H1 (cell line): ENCODE measurements at regions of chr11 and their contacts with region 1.

Region 1: GRCh38 chr11:124865921-124866583 is 820 bp downstream of the ROBO3 start:
- DNase-seq: peak in 1 of 2 experiments; percentile 89
- H3K4me3 ChIP-seq: peak overlapping the region; percentile 17 to 50 (median 24); a peak in 6 of 8 replicates
- H3K27ac ChIP-seq: no peak overlapping the region
- H3K4me1 ChIP-seq: peaks cover 0 to 23% (median 16%) of the 10 kb centered on the region in 4 experiments; a peak in 6 of 7 replicates
- H3K27me3 ChIP-seq: peaks cover 97 to 100% (median 100%) of the 10 kb centered on the region in 4 experiments
- CTCF ChIP-seq: peak; percentile 70 to 77 (median 75)
- EP300 ChIP-seq: no peak
- POLR2A ChIP-seq: no peak
- RAD21 ChIP-seq: peak; percentile 44 to 58

Region 2: DNA sequence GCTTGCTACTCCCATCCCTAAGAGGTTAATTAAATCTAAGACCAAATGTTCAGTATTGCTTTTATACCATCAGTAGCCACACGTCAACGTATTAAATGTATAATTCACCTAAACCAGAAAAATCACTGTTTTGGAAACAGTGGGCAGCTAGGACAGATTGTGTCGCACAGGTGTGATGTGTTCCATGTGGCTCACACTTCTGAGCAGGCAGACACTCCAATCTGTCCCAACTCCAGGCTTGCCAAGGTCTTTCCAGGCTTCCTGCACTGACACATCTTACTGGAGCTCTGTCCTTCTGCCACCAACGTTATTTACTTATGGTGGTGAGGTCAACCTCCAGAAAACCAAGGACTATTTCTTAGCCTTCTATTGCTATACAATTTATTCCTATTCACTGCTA is 203.9 kb before region 1 on chr11:
- CTCF ChIA-PET with region 1: interaction called, 15 read pairs
- POLR2A ChIA-PET with region 1: no interaction called
- DNase-seq: no peak
- H3K4me3 ChIP-seq: no peak overlapping the region
- H3K27ac ChIP-seq: no peak overlapping the region
- H3K4me1 ChIP-seq: peaks cover 0 to 7% (median 4%) of the 10 kb centered on the region in 4 experiments; a peak in 4 of 7 replicates
- H3K27me3 ChIP-seq: no peaks in the 10 kb centered on the region; a peak in 2 of 7 replicates
- CTCF ChIP-seq: no peak
- EP300 ChIP-seq: no peak
- POLR2A ChIP-seq: no peak
- RAD21 ChIP-seq: no peak

Region 3: DNA sequence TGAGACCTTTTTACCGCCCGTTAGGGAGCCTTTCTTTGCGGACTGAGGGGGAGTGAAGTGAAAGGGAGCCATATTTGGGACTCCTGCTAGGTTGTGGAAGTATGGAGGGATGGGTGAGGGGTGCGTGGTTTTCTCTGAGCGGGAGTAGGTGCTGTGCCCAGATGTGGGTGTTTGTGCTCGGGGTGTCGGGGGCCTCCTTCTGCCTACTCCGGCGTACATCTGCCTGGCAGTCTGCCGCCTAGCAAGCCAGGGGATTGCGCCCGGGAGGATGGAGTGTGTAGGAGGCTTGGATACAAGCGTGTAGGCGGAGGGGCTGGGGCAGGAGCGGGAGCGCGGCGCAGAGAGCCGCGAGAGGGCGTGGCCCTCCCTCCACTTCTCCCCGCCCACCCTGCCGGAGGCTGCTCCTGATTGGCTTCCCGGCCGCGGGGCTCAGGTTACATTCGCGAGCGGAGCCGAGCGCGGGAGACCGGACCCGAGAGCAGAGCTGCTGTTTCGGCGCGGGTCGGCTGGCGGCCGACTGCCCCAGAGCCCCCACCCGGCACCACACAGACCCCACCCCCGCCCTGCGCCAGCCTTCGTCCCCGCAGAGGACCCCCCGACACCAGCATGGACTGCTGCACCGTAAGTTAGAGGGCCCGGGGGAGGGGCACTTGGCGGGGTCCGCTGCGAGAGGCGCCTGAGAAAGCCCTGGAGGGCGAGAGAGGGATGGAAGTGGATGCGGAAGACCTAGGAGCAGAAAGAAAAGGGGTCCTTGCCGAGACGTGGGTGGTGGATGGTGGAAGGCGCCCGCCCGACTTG is 126.4 kb before region 1 on chr11 and contains the start of gene NRGN:
- CTCF ChIA-PET with region 1: interaction called, 14 read pairs
- POLR2A ChIA-PET with region 1: no interaction called
- DNase-seq: peak; percentile 76 to 95
- H3K4me3 ChIP-seq: peak within 1 kb of the TSS; percentile 40 to 68 (median 62)
- H3K27ac ChIP-seq: no peak within 1 kb of the TSS
- H3K4me1 ChIP-seq: peaks cover 0 to 15% (median 2%) of the 10 kb centered on the region in 4 experiments; a peak in 5 of 7 replicates
- H3K27me3 ChIP-seq: peaks cover 69 to 93% (median 83%) of the 10 kb centered on the region in 4 experiments
- CTCF ChIP-seq: no peak
- EP300 ChIP-seq: no peak
- POLR2A ChIP-seq: no peak
- RAD21 ChIP-seq: no peak
- total RNA-seq, gene NRGN: 0.60 and 0.75 TPM in 2 replicates

Region 4: GRCh38 chr11:124753205-124753604 is 112.8 kb before region 1 on chr11:
- CTCF ChIA-PET with region 1: interaction called, 11 read pairs
- POLR2A ChIA-PET with region 1: no interaction called
- DNase-seq: no peak
- H3K4me3 ChIP-seq: no peak overlapping the region
- H3K27ac ChIP-seq: no peak overlapping the region
- H3K4me1 ChIP-seq: peaks cover 6 to 31% (median 12%) of the 10 kb centered on the region in 4 experiments
- H3K27me3 ChIP-seq: peaks cover 91 to 100% (median 97%) of the 10 kb centered on the region in 4 experiments
- CTCF ChIP-seq: no peak
- EP300 ChIP-seq: no peak
- POLR2A ChIP-seq: no peak
- RAD21 ChIP-seq: no peak

Region 5: DNA sequence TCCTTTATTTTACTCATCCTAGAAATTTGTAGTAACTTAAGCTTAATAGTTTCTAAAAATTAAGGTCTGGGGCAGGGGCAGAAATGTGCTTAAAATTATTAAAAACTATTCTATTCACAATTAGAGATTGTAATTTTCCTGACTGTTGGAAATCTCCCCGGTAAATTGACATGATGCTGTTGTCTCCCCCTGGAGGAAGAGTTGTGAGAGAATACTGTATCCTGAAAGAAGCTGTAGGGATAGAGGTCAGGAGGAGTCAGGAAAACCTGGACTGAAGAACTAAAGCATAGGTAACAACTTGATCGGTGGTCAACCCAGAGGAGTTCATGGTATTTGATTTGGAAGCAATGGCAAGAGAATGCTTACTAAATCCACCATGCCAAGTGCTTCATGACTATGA is 87.8 kb before region 1 on chr11:
- CTCF ChIA-PET with region 1: interaction called, 13 read pairs
- POLR2A ChIA-PET with region 1: no interaction called
- DNase-seq: no peak
- H3K4me3 ChIP-seq: no peak overlapping the region
- H3K27ac ChIP-seq: no peak overlapping the region
- H3K4me1 ChIP-seq: no peaks in the 10 kb centered on the region
- H3K27me3 ChIP-seq: no peaks in the 10 kb centered on the region
- CTCF ChIP-seq: peak in 2 of 3 experiments; percentile 44 to 63; a peak in 3 of 4 replicates
- EP300 ChIP-seq: no peak
- POLR2A ChIP-seq: no peak
- RAD21 ChIP-seq: peak; percentile 29 to 33; a peak in 3 of 4 replicates

Region 6: GRCh38 chr11:124837491-124837856 is 28.6 kb before region 1 on chr11:
- CTCF ChIA-PET with region 1: interaction called, 108 read pairs
- POLR2A ChIA-PET with region 1: no interaction called
- DNase-seq: peak in 1 of 2 experiments; percentile 52
- H3K4me3 ChIP-seq: no peak overlapping the region
- H3K27ac ChIP-seq: no peak overlapping the region
- H3K4me1 ChIP-seq: peaks cover 0 to 11% (median 3%) of the 10 kb centered on the region in 4 experiments; a peak in 6 of 7 replicates
- H3K27me3 ChIP-seq: peaks cover 46 to 58% (median 53%) of the 10 kb centered on the region in 4 experiments
- CTCF ChIP-seq: peak in 2 of 3 experiments; percentile 71 to 74; a peak in 3 of 4 replicates
- EP300 ChIP-seq: no peak
- POLR2A ChIP-seq: no peak
- RAD21 ChIP-seq: peak; percentile 58 to 69

Region 7: DNA sequence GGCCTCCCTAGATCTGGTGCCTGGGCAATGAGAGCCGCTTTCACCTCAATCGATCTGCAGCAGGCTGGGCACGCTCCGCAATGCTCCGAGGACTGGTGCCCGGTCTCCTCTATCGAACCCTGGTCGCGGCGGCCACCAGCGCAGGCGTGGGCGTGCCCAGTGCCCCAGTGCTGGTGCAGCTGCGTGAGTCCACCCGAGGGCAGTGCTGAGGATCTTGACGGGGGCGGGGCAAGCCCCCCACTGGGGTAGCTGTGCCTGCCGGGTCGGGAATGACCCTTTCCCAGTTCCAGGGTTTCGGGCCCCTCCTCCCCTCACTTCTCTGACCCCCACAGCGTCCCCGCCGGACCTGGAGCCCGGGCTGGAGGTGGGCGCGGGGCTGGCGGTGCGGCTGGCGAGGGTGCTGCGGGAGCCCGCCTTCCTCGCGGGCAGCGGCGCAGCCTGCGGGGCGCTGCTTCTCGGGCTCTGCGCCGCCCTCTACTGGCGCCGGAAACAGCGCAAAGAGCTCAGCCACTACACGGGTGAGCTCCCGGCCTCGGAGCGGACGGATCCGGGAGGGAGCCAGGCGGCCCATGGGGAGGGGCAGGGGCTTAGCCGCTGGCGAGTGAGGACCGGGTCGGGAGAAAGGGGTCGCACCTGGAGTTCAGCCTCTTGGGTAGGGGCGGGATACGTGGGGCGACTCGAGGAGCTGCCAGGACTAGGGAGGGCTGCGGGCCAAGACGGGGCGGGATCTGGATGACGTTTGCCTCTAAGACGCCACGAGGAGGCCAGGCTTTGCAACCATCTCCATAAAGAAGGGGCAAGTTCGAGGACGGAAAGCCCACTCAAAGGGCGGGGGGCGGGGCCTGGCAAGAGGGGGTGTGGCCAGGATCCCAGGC is 10.1 kb after region 1 on chr11:
- CTCF ChIA-PET with region 1: interaction called, 15 read pairs
- POLR2A ChIA-PET with region 1: interaction called, 4 read pairs
- DNase-seq: peak; percentile 78 to 93
- H3K4me3 ChIP-seq: peak overlapping the region; percentile 56 to 76 (median 62)
- H3K27ac ChIP-seq: peak overlapping the region; percentile 54; the same call in 1 of the 2 replicates
- H3K4me1 ChIP-seq: peaks cover 0 to 12% (median 8%) of the 10 kb centered on the region in 4 experiments; a peak in 5 of 7 replicates
- H3K27me3 ChIP-seq: peaks cover 5 to 48% (median 41%) of the 10 kb centered on the region in 4 experiments
- CTCF ChIP-seq: peak; percentile 65 to 77 (median 75)
- EP300 ChIP-seq: no peak
- POLR2A ChIP-seq: peak in 1 of 2 experiments; percentile 17; a peak in 1 of 3 replicates
- RAD21 ChIP-seq: peak in 1 of 2 experiments; percentile 37; a peak in 2 of 4 replicates